IMR-90 (cell line): ENCODE measurements at regions of chr5 and their contacts with region 1.

Region 1: DNA sequence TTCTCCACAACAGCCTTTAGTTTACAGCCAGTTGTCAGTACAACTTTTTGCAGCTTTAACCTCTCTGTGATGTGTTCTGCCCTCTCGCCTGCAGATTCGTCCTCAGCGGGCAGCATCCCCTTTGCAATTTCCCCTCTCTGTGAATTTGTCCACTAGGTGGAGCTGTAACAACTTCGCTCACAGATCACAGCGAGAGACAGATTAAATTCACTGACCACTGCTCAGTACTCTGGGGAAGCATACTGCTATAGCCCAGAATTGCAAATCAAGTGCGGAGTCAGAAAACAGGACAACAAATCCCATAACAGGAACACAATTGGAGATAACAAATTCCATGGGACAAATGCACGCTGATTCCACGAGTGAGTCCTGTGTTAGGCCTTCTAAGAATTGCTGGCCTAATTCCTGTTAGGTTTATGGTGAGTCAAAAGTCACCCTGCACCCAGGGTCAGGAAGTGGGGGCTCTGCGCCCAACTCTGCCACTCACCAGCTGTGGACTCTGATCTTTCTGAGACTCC is 2124.9 kb downstream of the MAT2B start:
- DNase-seq: peak; percentile 64
- ATAC-seq: peak; percentile 90
- H3K4me3 ChIP-seq: no peak overlapping the region
- H3K27ac ChIP-seq: no peak overlapping the region
- H3K4me1 ChIP-seq: peaks cover 2% of the 10 kb centered on the region; the same call in 1 of the 2 replicates
- H3K27me3 ChIP-seq: no peaks in the 10 kb centered on the region
- CTCF ChIP-seq: peak; percentile 57
- POLR2A ChIP-seq: no peak
- RAD21 ChIP-seq: peak; percentile 41

Region 2: GRCh38 chr5:165538065-165538464 is 92.3 kb before region 1 on chr5:
- CTCF ChIA-PET with region 1: no interaction called
- POLR2A ChIA-PET with region 1: no interaction called
- dilution Hi-C with region 1: no loop called
- in situ Hi-C with region 1: no loop called
- intact Hi-C with region 1: loop called (anchors 5 kb)
- DNase-seq: peak; percentile 44
- ATAC-seq: peak; percentile 78
- H3K4me3 ChIP-seq: no peak overlapping the region
- H3K27ac ChIP-seq: peak overlapping the region; percentile 27; the same call in 1 of the 2 replicates
- H3K4me1 ChIP-seq: no peaks in the 10 kb centered on the region; the same call in 1 of the 2 replicates
- H3K27me3 ChIP-seq: no peaks in the 10 kb centered on the region
- CTCF ChIP-seq: no peak
- POLR2A ChIP-seq: no peak
- RAD21 ChIP-seq: no peak

Region 3: DNA sequence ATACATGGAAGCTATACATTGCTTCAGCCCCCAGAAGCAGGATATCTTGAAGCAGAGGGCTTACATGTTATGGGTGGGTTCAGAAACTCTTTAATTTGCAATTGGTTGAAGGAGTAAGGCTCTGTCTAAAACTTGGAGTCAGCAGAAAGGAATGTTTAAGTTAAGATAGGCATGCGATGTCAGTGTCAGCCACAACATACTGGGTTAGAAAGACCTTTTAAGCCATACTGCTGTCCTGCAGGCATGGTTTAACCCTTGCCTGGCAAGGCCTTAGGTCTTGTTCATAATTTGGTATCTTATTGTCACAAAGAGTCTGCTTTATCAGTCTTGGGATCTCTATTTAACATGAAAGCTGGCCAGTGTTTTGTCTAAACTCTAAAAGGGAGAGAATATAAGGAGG is 1041.5 kb after region 1 on chr5:
- CTCF ChIA-PET with region 1: no interaction called
- POLR2A ChIA-PET with region 1: no interaction called
- dilution Hi-C with region 1: no loop called
- in situ Hi-C with region 1: no loop called
- intact Hi-C with region 1: no loop called
- DNase-seq: no peak
- ATAC-seq: no peak
- H3K4me3 ChIP-seq: no peak overlapping the region
- H3K27ac ChIP-seq: no peak overlapping the region
- H3K4me1 ChIP-seq: no peaks in the 10 kb centered on the region
- H3K27me3 ChIP-seq: no peaks in the 10 kb centered on the region
- CTCF ChIP-seq: no peak
- POLR2A ChIP-seq: no peak
- RAD21 ChIP-seq: no peak

Region 4: GRCh38 chr5:167244583-167244982 is 1614.3 kb after region 1 on chr5:
- CTCF ChIA-PET with region 1: no interaction called
- POLR2A ChIA-PET with region 1: no interaction called
- dilution Hi-C with region 1: no loop called
- in situ Hi-C with region 1: no loop called
- intact Hi-C with region 1: loop called (anchors 10 kb)
- DNase-seq: no peak
- ATAC-seq: no peak
- H3K4me3 ChIP-seq: no peak overlapping the region
- H3K27ac ChIP-seq: no peak overlapping the region
- H3K4me1 ChIP-seq: no peaks in the 10 kb centered on the region
- H3K27me3 ChIP-seq: no peaks in the 10 kb centered on the region
- CTCF ChIP-seq: peak; percentile 28
- POLR2A ChIP-seq: no peak
- RAD21 ChIP-seq: no peak

Region 5: DNA sequence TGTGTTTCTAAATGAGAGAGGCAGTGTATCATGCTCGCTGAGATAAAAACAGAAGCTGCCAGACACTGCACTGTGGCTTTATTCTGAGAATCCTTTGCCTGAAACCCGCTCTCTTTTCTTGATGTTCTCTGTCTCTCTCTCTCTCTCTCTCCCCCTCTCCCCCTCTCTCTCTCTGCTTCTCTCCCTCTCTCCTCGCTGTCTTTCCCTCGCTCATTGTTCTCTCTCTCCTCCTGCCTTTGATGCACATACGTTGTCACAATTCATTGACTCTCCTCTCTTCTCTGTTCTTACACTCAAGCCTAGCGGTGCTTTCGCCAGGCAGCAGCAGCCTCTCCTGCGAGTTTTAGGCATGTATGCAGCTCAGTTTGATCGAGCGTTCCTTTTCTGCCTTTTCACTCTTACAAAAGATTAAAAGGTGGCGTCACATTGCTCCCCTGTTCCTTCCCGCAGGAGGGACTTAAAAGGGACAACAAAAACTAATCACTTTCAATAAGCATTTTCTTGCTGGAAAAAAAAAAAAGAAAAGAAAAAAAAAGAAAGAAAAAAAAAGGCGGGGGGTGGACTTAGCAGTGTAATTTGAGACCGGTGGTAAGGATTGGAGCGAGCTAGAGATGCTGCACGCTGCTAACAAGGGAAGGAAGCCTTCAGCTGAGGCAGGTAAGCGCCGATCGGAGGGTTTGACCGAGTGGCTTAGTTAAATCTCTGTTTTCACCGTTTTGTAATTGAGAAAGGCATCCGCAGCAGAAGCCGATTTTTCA is 1943.2 kb after region 1 on chr5:
- CTCF ChIA-PET with region 1: no interaction called
- POLR2A ChIA-PET with region 1: no interaction called
- dilution Hi-C with region 1: no loop called
- in situ Hi-C with region 1: loop called (anchors 25 kb)
- intact Hi-C with region 1: loop called (anchors 5 kb)
- DNase-seq: peak; percentile 50
- ATAC-seq: peak; percentile 89
- H3K4me3 ChIP-seq: peak overlapping the region; percentile 46
- H3K27ac ChIP-seq: no peak overlapping the region
- H3K4me1 ChIP-seq: no peaks in the 10 kb centered on the region
- H3K27me3 ChIP-seq: peaks cover 21% of the 10 kb centered on the region
- CTCF ChIP-seq: no peak
- POLR2A ChIP-seq: no peak
- RAD21 ChIP-seq: no peak